ENCODE measurements at regions of chr3 and their contacts with region 1.

Region 1: DNA sequence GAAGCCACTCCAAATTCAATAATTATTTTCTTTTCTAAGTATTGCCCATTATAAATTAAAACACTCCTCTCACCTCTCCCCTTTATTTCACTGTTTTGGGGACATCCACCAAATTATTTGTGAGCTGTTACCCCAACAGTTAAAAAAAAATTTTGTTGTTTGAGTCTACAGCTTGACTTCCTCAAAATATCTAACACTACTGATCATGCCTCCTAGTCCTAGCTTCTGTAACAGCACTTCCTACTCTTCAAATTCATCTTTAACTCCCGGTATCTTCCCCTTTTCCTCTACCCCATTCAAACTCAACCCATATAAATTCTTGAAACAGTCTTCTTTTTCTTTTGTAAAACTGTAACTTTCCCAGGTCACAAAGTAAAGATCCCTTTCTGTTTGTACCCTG is 15.9 kb downstream of the PARL start:
- DNase-seq: no peak
- ATAC-seq: no peak
- H3K4me3 ChIP-seq: no peak overlapping the region
- H3K27ac ChIP-seq: no peak overlapping the region
- H3K4me1 ChIP-seq: peaks cover 13% of the 10 kb centered on the region
- H3K27me3 ChIP-seq: no peaks in the 10 kb centered on the region
- CTCF ChIP-seq: no peak

Region 2: GRCh38 chr3:183734750-183735494 is 133.9 kb before region 1 on chr3:
- intact Hi-C with region 1: no loop called
- DNase-seq: no peak
- ATAC-seq: no peak
- H3K4me3 ChIP-seq: no peak overlapping the region
- H3K27ac ChIP-seq: no peak overlapping the region
- H3K4me1 ChIP-seq: no peaks in the 10 kb centered on the region
- H3K27me3 ChIP-seq: no peaks in the 10 kb centered on the region
- CTCF ChIP-seq: no peak

Region 3: DNA sequence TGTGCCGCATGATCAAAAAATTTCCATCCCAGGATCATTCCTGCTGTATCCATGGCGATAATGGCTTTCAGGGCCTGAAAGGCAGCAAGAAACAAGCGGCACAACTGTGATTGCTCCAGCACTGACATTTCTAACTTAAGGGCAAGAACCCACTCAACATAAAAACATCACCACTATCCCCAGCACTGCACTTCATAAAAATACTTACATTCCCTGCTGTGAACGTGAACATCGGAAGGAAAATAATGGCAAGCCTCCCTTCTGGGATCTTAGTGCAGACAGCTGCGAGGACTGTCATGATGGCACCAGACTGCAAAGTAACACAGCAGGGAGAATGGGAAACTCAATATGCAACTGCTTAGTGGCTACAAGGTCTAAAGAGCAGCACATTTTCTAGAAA is 35.3 kb before region 1 on chr3:
- intact Hi-C with region 1: loop called in 1 of 2 experiments (anchors 2 kb)
- DNase-seq: no peak
- ATAC-seq: no peak
- H3K4me3 ChIP-seq: no peak overlapping the region
- H3K27ac ChIP-seq: no peak overlapping the region
- H3K4me1 ChIP-seq: no peaks in the 10 kb centered on the region
- H3K27me3 ChIP-seq: no peaks in the 10 kb centered on the region
- CTCF ChIP-seq: no peak

Region 4: DNA sequence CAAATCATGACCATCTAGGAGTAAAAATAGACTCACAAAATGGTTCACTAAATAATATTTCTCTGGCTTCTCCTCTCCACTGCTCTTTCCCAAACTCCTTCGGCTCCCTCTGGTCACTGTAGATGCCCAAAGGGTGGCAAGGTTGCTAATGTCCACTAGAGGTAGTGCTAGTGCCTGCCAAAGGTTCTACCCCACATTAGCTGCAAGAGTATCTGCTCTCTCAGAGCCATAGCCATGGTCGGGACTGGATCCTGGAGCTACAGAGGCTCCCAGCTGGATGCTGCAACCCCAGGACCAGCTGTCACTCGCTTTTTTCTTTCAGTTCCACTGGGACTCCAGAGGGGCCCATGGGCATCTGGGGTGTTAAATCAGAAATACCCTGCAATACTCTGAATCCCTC is 171.2 kb after region 1 on chr3:
- intact Hi-C with region 1: no loop called
- DNase-seq: no peak
- ATAC-seq: peak; percentile 56 to 88 (median 68)
- H3K4me3 ChIP-seq: no peak overlapping the region
- H3K27ac ChIP-seq: no peak overlapping the region
- H3K4me1 ChIP-seq: no peaks in the 10 kb centered on the region
- H3K27me3 ChIP-seq: no peaks in the 10 kb centered on the region
- CTCF ChIP-seq: peak; percentile 37

Measured in psoas muscle (tissue), 8 donors.